ENCODE measurements at regions of chr6 and their contacts with region 1.

Region 1: DNA sequence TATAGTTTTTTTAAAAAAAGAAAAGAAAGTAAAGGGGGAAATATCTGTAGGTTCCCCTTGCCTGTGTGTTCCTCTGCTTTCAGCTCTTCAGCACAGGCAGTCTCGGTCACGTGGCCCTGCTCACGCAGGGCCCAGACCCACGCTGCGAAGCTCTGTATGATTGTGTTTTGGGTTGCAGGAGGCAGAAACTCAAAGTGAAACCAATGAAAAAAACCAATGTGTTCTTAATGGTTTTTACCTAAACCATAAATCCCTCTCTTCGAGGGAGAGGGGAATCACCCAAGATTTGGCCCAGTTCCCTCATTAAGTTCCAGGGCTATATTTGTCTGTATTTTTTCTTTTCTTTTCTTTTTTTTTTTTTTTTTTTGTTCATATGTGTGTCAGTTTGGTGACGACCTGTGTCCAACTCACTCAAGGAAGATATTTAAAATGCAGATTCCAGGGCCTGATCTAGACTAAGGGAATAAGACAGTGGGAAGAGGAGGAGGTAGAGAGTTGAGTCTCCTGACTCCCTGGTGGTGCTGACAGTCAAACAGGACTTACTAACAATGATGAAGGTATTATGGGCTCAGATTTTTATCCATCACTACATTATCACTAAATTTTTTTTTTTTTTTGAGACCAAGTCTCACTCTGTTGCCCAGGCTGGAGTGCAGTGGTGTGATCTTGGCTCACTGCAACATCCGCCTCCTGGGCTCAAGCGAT is 33.8 kb upstream of the RREB1 start:
- DNase-seq: peak; percentile 84
- H3K4me3 Mint-ChIP-seq: no peak overlapping the region
- H3K27ac Mint-ChIP-seq: peak overlapping the region; percentile 9
- H3K4me1 Mint-ChIP-seq: peaks cover 12% of the 10 kb centered on the region
- H3K27me3 Mint-ChIP-seq: peaks cover 9% of the 10 kb centered on the region

Region 2: DNA sequence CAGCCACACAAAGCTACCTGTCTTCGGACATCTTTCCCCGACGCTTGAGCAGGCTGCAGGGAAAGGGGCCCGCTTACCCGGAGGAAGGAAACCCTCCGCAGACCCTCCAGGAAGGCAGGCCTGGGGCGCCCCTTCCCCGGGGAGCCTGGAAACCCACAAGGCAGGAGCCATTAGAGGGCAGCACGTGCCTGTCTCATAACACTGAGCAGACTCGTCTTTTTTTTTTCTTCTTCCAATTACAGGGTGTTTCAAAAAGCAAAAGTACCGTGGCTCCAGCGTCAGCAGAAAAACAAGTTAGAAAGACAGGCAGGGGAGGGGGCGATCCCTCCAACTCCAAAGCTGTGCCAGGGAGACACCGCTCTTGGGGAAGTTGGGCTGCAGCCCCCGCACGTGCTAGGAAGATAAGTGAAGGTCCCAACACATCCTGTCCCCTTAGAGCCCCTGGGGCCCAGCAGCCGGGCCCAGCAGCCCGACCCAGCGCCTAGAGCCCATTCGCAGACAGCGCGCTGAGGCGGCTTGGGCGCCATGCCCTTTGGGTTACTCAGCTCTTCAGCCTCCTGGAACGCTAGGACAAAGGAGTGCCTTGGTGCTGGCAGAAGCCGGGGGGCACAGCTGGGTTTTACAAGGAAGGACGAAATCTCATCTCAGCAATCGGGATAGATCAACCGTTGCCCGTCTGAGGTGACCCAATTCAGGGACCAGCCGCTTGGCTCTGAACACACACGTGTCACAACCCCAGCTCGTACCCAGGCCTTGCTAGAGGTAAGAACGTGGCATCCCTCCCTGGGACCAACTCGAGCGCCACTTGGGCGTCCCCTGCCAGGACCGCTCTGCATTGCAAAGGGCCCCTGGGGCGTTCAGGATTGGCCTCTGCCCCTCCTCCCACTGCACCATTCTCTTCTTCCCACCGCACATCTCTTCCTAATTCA is 349.2 kb before region 1 on chr6:
- CTCF ChIA-PET with region 1: no interaction called
- intact Hi-C with region 1: no loop called
- DNase-seq: peak; percentile 82
- H3K4me3 Mint-ChIP-seq: peak overlapping the region; percentile 34
- H3K27ac Mint-ChIP-seq: no peak overlapping the region
- H3K4me1 Mint-ChIP-seq: peaks cover 4% of the 10 kb centered on the region
- H3K27me3 Mint-ChIP-seq: no peaks in the 10 kb centered on the region

Region 3: DNA sequence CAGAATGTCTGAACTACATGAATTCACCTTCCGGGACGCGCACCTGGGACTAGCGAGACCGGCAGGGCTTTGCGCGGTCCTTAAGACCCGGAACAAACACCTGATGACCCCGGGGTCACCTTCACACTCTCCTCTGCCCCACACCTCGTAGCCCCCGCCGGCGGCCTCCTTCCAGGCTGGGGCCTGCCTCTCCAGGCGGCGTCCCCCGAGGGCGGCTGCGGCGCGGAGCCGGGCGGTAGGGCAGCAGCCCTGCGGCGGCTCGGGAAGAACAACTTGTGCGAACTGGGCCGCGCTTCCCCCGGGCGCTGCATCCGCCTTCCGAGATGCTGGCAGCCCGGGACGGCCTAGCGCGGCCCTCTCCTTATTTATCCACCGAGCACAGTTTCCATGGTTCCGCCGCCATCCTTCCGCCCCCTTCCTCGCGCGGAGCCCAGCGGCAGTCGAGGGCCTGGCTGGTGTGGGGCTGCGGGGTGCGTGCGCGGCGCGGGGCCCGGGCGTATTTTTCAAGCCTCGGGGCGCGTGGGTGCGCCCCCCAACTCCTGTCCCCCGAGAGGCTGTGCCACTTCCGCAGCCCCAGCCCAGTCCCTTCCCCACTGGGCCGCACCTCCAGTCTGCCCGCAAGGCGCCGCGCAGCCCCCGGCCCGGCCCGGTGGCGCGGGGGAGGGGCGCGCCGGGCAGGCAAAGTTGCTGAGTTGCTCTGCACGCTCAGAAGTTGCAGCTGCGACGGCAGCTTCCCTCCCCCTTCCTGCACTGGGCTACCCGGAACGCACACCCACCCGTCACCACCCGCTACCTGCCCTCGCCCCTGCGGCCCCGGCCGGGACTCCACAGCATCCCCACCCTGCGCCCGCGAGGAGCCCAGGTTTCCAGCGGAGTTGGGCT is 22.5 kb before region 1 on chr6:
- CTCF ChIA-PET with region 1: no interaction called
- intact Hi-C with region 1: loop called (anchors 1 kb)
- DNase-seq: peak; percentile 55
- H3K4me3 Mint-ChIP-seq: peak overlapping the region; percentile 62
- H3K27ac Mint-ChIP-seq: no peak overlapping the region
- H3K4me1 Mint-ChIP-seq: peaks cover 12% of the 10 kb centered on the region
- H3K27me3 Mint-ChIP-seq: peaks cover 11% of the 10 kb centered on the region

Region 4: GRCh38 chr6:7086488-7086887 is 12.5 kb after region 1 on chr6:
- CTCF ChIA-PET with region 1: interaction called, 8 read pairs
- intact Hi-C with region 1: loop called (anchors 1 kb)
- DNase-seq: peak; percentile 65
- H3K4me3 Mint-ChIP-seq: peak overlapping the region; percentile 17
- H3K27ac Mint-ChIP-seq: no peak overlapping the region
- H3K4me1 Mint-ChIP-seq: peaks cover 29% of the 10 kb centered on the region
- H3K27me3 Mint-ChIP-seq: no peaks in the 10 kb centered on the region

Region 5: DNA sequence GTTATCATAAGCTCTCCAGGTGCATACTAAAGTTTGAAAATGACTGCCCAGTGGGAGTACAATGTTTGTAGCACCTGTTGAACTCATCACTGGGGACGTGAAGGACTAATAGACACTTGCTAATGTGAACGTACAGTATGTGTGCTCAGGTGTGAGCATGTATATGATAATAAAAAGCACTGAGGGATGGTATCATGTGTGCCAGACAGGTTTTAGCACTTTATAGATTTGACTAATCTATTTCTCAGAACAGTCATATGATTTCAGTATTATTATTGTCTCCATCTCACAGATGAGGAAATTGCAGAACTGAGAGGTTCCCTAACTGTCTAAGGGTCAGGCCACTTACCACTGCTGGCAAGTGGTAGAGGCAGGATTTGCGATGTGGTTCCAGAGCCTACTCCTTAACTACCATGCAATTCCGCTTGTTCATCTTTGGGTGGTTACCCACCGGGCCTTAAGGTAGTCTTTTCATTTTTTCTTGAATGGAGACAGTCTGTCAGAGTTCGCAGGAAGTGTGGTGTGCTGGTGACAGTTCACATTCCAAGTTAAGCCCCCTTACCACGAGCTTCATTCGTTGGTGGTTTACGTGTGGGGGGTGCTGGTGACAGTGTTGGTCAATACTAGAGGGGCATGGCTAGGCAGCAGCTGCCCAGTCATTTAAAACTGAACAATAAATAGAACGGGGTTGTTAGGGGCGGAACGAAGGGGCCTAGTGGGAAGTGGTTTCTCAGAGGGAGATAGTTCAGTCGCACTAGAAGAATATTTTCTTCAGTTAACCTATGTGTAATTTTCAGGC is 80.6 kb after region 1 on chr6:
- CTCF ChIA-PET with region 1: no interaction called
- intact Hi-C with region 1: loop called (anchors 1 kb)
- DNase-seq: peak; percentile 36
- H3K4me3 Mint-ChIP-seq: peak overlapping the region; percentile 19
- H3K27ac Mint-ChIP-seq: peak overlapping the region; percentile 65
- H3K4me1 Mint-ChIP-seq: peaks cover 85% of the 10 kb centered on the region
- H3K27me3 Mint-ChIP-seq: no peaks in the 10 kb centered on the region